ENCODE measurements at regions of chr5 and their contacts with region 1.

Region 1: GRCh38 chr5:134592141-134592746 is 40.4 kb downstream of the SAR1B start:
- ATAC-seq: peak in 2 of 8 experiments; percentile 19 to 22
- H3K4me3 ChIP-seq: no peak overlapping the region
- H3K27ac ChIP-seq: no peak overlapping the region
- H3K4me1 ChIP-seq: no peaks in the 10 kb centered on the region

Region 2: DNA sequence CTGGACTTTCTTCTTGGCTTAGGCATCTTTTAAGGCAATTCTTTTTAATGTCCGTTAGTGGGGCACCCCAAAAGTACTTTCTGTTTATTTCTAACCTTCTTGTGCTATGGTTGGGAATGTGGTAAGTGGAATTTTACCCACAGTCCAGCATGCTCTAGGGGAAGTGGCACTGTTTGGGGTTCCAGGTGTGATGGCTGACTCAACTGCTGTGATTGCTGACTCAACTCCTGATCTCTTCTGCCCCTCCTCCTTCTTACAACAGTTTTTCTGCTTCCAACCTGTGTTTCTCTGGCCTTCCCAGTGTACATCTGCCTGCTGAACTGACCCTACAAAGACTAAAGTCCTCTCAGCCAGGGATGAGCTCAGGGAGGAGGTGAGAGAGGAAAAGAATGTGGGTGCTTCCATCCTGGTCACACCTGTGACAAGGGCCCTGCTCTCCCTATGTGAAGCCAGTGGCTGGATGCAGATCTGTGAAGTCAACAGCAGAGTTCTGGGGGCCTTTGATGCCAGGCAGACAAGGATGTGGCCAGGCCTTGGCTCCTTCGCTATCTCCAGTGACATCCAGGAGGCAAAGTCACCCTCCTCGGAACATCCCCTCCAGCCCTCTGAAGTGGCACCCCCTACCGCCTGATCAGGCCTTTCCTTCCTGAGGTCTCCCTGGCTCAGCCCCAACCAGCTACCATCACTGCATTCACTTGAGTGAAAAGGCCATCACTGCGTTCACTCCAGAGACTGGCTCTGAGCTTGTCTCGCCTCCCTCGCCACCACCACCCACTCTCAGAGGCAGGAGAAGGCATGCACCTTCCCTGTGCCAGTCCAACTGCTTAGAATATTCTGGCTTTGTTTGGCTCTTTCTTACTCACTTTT is 696.0 kb before region 1 on chr5:
- in situ Hi-C with region 1: no loop called
- ATAC-seq: no peak
- H3K4me3 ChIP-seq: no peak overlapping the region
- H3K27ac ChIP-seq: no peak overlapping the region
- H3K4me1 ChIP-seq: peaks cover 30 to 50% of the 10 kb centered on the region in 2 donors

Region 3: GRCh38 chr5:134304311-134304710 is 287.9 kb before region 1 on chr5:
- in situ Hi-C with region 1: loop called in 3 of 9 experiments (anchors 10 to 25 kb)
- ATAC-seq: no peak
- H3K4me3 ChIP-seq: no peak overlapping the region
- H3K27ac ChIP-seq: no peak overlapping the region
- H3K4me1 ChIP-seq: no peaks in the 10 kb centered on the region